Endothelial cell of umbilical vein (primary cell): ENCODE measurements at regions of chr12 and their contacts with region 1.

Region 1: GRCh38 chr12:10749700-10750384 is 26.7 kb upstream of the YBX3 start:
- DNase-seq: peak; percentile 98
- H3K4me3 ChIP-seq: peak overlapping the region in 1 of 3 experiments; percentile 24
- H3K27ac ChIP-seq: peak overlapping the region; percentile 36
- H3K4me1 ChIP-seq: peaks cover 4% of the 10 kb centered on the region
- H3K27me3 ChIP-seq: peaks cover 9 to 13% of the 10 kb centered on the region in 2 experiments
- CTCF ChIP-seq: peak; percentile 80 to 93
- POLR2A ChIP-seq: no peak

Region 2: GRCh38 chr12:10235761-10236631 is 513.8 kb before region 1 on chr12:
- CTCF ChIA-PET with region 1: interaction called, 19 read pairs
- POLR2A ChIA-PET with region 1: no interaction called
- dilution Hi-C with region 1: no loop called
- intact Hi-C with region 1: loop called (anchors 1 kb)
- DNase-seq: peak; percentile 55
- H3K4me3 ChIP-seq: no peak overlapping the region
- H3K27ac ChIP-seq: no peak overlapping the region
- H3K4me1 ChIP-seq: no peaks in the 10 kb centered on the region
- H3K27me3 ChIP-seq: no peaks in the 10 kb centered on the region
- CTCF ChIP-seq: peak; percentile 72 to 73
- POLR2A ChIP-seq: no peak

Region 3: DNA sequence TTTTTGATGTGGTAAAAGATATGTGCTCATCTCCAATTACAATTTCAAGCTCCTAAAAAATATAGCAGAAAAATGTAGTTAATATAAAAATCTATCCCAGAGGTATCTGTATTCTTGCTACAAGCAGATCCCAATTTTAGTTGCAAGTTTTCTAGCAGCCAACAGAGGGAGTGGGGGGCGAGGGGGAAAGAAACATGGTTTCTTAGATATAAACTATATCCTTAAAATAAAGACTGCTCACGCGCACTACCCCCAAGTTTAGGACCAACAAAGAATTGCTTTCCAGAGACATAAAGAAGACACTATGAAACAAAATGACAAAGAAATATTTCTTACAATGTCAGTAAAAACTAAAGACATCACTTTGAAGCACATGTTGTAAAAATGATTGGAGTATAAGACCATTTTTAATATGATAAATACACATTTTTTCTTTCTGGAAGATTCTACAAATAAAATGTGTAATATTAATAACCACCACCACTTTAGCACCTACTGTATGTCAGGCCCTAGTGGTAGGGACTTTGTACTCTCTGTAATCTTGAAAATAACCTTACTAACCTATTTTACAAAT is 141.9 kb before region 1 on chr12:
- CTCF ChIA-PET with region 1: interaction called, 6 read pairs
- POLR2A ChIA-PET with region 1: no interaction called
- dilution Hi-C with region 1: no loop called
- intact Hi-C with region 1: loop called (anchors 1 kb)
- DNase-seq: peak; percentile 37
- H3K4me3 ChIP-seq: no peak overlapping the region
- H3K27ac ChIP-seq: no peak overlapping the region
- H3K4me1 ChIP-seq: peaks cover 10% of the 10 kb centered on the region
- H3K27me3 ChIP-seq: no peaks in the 10 kb centered on the region
- CTCF ChIP-seq: peak; percentile 15 to 31
- POLR2A ChIP-seq: no peak

Region 4: GRCh38 chr12:10697156-10697555 is 52.7 kb before region 1 on chr12:
- CTCF ChIA-PET with region 1: interaction called, 23 read pairs
- POLR2A ChIA-PET with region 1: no interaction called
- dilution Hi-C with region 1: no loop called
- intact Hi-C with region 1: no loop called
- DNase-seq: no peak
- H3K4me3 ChIP-seq: no peak overlapping the region
- H3K27ac ChIP-seq: no peak overlapping the region
- H3K4me1 ChIP-seq: no peaks in the 10 kb centered on the region
- H3K27me3 ChIP-seq: no peaks in the 10 kb centered on the region
- CTCF ChIP-seq: no peak
- POLR2A ChIP-seq: no peak

Region 5: GRCh38 chr12:10726940-10727339 is 22.9 kb before region 1 on chr12:
- CTCF ChIA-PET with region 1: interaction called, 30 read pairs
- POLR2A ChIA-PET with region 1: no interaction called
- dilution Hi-C with region 1: no loop called
- intact Hi-C with region 1: loop called (anchors 1 kb)
- DNase-seq: no peak
- H3K4me3 ChIP-seq: no peak overlapping the region
- H3K27ac ChIP-seq: no peak overlapping the region
- H3K4me1 ChIP-seq: peaks cover 9% of the 10 kb centered on the region
- H3K27me3 ChIP-seq: no peaks in the 10 kb centered on the region
- CTCF ChIP-seq: no peak
- POLR2A ChIP-seq: no peak

Region 6: GRCh38 chr12:11202811-11203210 is 453.0 kb after region 1 on chr12:
- CTCF ChIA-PET with region 1: interaction called, 19 read pairs
- POLR2A ChIA-PET with region 1: no interaction called
- dilution Hi-C with region 1: no loop called
- intact Hi-C with region 1: no loop called
- DNase-seq: no peak
- H3K4me3 ChIP-seq: no peak overlapping the region
- H3K27ac ChIP-seq: no peak overlapping the region
- H3K4me1 ChIP-seq: no peaks in the 10 kb centered on the region
- H3K27me3 ChIP-seq: no peaks in the 10 kb centered on the region
- CTCF ChIP-seq: no peak
- POLR2A ChIP-seq: no peak